ENCODE measurements at regions of chr11 and their contacts with region 1.

Region 1: GRCh38 chr11:75280227-75280701 is 39.7 kb downstream of the TPBGL start:
- DNase-seq: peak; percentile 84
- ATAC-seq: peak; percentile 74
- H3K4me3 Mint-ChIP-seq: no peak overlapping the region
- H3K27ac Mint-ChIP-seq: no peak overlapping the region
- H3K4me1 Mint-ChIP-seq: peaks cover 24% of the 10 kb centered on the region
- H3K27me3 Mint-ChIP-seq: no peaks in the 10 kb centered on the region

Region 2: GRCh38 chr11:75328426-75329277 is 48.4 kb after region 1 on chr11:
- CTCF ChIA-PET with region 1: interaction called, 21 read pairs
- DNase-seq: peak; percentile 88
- ATAC-seq: peak; percentile 93
- H3K4me3 Mint-ChIP-seq: peak overlapping the region; percentile 32
- H3K27ac Mint-ChIP-seq: peak overlapping the region; percentile 86
- H3K4me1 Mint-ChIP-seq: peaks cover 39% of the 10 kb centered on the region
- H3K27me3 Mint-ChIP-seq: no peaks in the 10 kb centered on the region

Region 3: DNA sequence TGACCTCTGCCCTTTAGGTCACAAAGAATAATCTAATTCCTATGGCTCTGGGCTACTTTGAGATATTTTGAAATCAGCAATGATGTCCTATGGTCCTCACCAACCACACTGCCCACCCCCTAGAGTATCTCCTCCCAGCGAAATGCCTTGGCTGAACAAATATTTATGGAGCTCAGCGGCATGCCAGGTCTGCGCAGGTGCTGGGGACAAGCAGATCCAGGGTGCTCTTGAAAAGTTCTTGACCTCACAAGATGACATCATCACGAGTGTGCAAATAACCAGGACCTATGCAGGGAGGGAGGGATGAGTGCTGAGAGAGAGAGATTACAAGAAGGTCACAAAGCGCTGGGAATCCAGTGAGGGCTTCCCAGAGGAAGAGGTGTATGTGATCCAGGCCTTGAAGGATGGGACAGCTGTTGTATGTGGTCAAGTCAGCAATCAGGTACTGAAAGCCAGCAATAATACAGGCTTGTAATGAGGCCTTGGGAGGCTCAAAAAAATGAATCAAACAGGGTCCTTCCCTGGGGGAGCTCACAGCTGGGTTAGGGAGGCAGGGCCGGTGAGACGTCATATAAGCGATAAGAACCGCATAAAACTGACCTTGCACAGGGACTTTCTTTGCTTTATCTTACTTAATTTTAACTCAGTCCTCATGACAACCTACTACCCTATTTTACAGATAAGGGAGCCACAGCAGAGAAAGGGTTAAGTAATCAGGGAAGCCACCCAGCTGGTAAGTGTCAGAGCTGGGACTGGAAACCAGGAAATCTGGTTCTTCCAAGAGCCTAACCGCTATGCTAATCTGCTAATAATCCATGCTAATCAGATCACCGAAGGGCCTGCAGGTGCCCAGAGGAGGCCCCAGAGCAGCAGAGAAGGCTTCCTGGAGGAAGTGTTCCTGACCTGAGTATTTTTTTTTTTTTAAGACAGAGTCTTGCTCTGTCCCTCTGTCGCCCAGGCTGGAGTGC is 62.9 kb after region 1 on chr11:
- CTCF ChIA-PET with region 1: interaction called, 15 read pairs
- DNase-seq: no peak
- ATAC-seq: no peak
- H3K4me3 Mint-ChIP-seq: no peak overlapping the region
- H3K27ac Mint-ChIP-seq: peak overlapping the region; percentile 4
- H3K4me1 Mint-ChIP-seq: peaks cover 82% of the 10 kb centered on the region
- H3K27me3 Mint-ChIP-seq: no peaks in the 10 kb centered on the region

Region 4: DNA sequence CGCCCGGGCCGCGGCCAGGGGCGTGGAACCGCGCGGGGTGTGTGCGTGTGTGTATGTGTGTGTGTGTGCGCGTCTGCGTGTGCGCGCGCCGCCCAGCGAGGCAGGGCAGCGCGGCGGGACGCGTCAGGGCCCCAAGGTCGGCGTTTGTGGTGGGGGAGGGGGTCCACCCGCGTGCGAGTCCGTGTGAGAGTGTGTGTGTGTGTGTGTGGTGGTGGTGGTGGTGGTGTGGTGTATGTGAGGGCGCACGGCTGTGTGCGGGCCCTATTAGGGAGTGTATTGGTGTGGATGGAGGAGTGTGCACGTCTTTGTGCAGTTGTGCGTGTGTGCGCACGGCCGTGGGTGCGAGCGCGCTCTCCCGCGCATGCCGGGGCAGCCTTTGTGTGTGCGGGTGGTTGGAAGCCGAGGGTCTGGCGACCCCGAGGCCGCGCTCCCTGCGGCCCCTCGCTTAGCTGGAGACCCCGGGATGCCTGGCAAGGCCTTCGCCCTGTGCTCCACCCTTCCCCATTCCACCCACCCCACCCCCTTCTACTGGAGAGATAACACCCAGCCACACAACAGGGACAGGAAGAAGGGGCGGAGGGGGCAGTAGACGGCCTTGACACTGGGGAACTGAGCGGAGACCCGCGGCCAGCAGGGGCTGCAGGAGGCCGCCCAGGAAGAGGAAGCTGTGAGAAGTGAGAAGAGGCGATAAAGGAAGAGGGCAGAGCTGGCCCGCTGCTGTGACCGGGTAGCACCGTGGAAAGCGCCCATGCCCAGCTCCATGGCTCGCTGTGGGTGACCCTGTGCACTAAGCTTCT is 71.7 kb after region 1 on chr11:
- CTCF ChIA-PET with region 1: interaction called, 16 read pairs
- DNase-seq: peak; percentile 76
- ATAC-seq: peak; percentile 72
- H3K4me3 Mint-ChIP-seq: peak overlapping the region; percentile 74
- H3K27ac Mint-ChIP-seq: peak overlapping the region; percentile 86
- H3K4me1 Mint-ChIP-seq: peaks cover 48% of the 10 kb centered on the region
- H3K27me3 Mint-ChIP-seq: no peaks in the 10 kb centered on the region